Heart right ventricle (tissue), 16 donors: ENCODE measurements at regions of chr17 and their contacts with region 1.

Region 1: DNA sequence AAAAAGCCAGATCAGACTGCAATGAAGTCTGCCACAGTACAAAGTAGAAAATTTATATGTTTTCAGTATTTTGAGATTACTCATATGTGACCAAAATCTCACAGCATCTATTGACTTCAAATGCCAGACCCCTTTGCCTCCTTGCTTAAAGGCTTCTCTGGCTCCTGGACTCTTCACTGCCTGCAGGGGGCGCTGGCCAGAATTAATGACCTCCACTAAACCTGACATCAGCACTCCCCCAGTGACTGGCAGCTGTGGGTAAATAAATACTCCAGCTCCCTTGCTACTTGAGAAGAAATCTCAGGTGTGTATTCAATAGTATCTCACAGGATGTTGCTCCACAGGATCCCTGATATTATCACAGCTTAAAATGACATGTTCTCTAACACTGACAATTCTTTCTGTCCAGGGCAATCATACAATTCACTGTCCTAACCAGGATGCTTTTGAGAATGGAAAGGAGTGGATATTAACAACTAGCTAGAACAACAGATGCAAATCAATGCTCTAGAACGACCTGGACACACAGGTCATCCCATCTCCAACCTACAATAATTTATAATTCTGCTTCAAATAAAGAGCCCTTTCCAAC is 4.0 kb downstream of the BECN1 start:
- DNase-seq: peak; percentile 23 to 40
- ATAC-seq: no peak
- H3K4me3 ChIP-seq: no peak overlapping the region
- H3K27ac ChIP-seq: no peak overlapping the region
- H3K4me1 ChIP-seq: peaks cover 5 to 28% (median 20%) of the 10 kb centered on the region in 9 donors
- H3K27me3 ChIP-seq: no peaks in the 10 kb centered on the region
- CTCF ChIP-seq: peak; percentile 28 to 78 (median 65)

Region 2: GRCh38 chr17:42577532-42578281 is 242.3 kb before region 1 on chr17 and contains the start of gene PSMC3IP:
- intact Hi-C with region 1: loop called in 2 of 10 experiments (anchors 10 kb)
- DNase-seq: peak; percentile 95 to 97
- ATAC-seq: peak; percentile 92 to 98 (median 96)
- H3K4me3 ChIP-seq: peak within 1 kb of the TSS; percentile 48 to 86 (median 69)
- H3K27ac ChIP-seq: peak within 1 kb of the TSS; percentile 33 to 96 (median 94)
- H3K4me1 ChIP-seq: peaks cover 10 to 46% (median 23%) of the 10 kb centered on the region in 9 donors
- H3K27me3 ChIP-seq: no peaks in the 10 kb centered on the region
- CTCF ChIP-seq: peak in 7 of 9 donors; percentile 19 to 59 (median 43)
- total RNA-seq, gene PSMC3IP: 1.1 to 3.1 (median 1.6) TPM

Region 3: DNA sequence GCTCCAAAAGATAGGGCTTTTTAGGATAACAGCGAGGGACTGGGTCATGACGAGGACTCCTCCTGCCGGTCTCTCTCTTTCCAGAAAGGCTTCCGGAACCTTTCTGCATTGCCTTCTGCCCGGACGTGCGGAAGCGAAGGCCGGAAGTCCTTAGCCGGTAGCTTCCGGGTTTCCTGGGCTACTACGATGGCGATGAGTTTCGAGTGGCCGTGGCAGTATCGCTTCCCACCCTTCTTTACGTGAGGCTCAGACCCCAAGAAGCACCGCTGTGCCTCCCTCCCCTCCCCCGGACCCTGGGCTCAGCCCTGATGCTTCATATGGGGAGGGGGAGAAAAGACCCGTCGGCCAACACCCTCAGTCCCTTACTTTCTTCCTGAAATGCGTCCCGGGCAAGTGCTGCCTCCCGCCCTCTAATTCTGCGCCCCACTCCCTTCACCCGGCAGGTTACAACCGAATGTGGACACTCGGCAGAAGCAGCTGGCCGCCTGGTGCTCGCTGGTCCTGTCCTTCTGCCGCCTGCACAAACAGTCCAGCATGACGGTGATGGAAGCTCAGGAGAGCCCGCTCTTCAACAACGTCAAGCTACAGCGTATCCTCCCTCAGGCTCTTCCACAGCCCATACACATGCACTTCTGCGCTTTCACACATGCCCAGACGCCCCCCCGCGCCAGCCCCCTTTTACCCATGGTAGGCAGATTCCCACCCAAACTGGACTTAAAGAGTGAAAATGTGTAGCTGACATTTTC is 46.6 kb before region 1 on chr17 and contains the start of gene VPS25:
- intact Hi-C with region 1: loop called in 1 of 10 experiments (anchors 5 kb)
- DNase-seq: peak; percentile 72 to 86
- ATAC-seq: peak; percentile 88 to 98 (median 97)
- H3K4me3 ChIP-seq: peak within 1 kb of the TSS; percentile 34 to 99 (median 76)
- H3K27ac ChIP-seq: peak within 1 kb of the TSS in 9 of 10 donors; percentile 38 to 94 (median 84)
- H3K4me1 ChIP-seq: peaks cover 2 to 18% (median 14%) of the 10 kb centered on the region in 9 donors
- H3K27me3 ChIP-seq: no peaks in the 10 kb centered on the region
- CTCF ChIP-seq: peak in 5 of 9 donors; percentile 14 to 56 (median 40)
- total RNA-seq, gene VPS25: 33.3 to 47.4 (median 37.3) TPM

Region 4: GRCh38 chr17:42843358-42843934 is 23.4 kb after region 1 on chr17:
- intact Hi-C with region 1: no loop called
- DNase-seq: peak in 1 of 2 donors; percentile 58
- ATAC-seq: peak; percentile 56 to 87 (median 78)
- H3K4me3 ChIP-seq: no peak overlapping the region
- H3K27ac ChIP-seq: peak overlapping the region in 1 of 10 donors; percentile 12
- H3K4me1 ChIP-seq: peaks cover 0 to 22% (median 0%) of the 10 kb centered on the region in 9 donors
- H3K27me3 ChIP-seq: no peaks in the 10 kb centered on the region
- CTCF ChIP-seq: peak in 8 of 9 donors; percentile 71 to 96 (median 92)